ENCODE measurements at regions of chr4 and their contacts with region 1.

Region 1: GRCh38 chr4:87679449-87680169 is 29.5 kb downstream of the DMP1 start:
- DNase-seq: no peak
- H3K4me3 ChIP-seq: no peak overlapping the region
- H3K27ac ChIP-seq: no peak overlapping the region
- H3K4me1 ChIP-seq: no peaks in the 10 kb centered on the region
- H3K27me3 ChIP-seq: no peaks in the 10 kb centered on the region
- CTCF ChIP-seq: peak; percentile 87

Region 2: GRCh38 chr4:87838890-87839591 is 159.4 kb after region 1 on chr4:
- CTCF ChIA-PET with region 1: no interaction called
- POLR2A ChIA-PET with region 1: no interaction called
- intact Hi-C with region 1: loop called (anchors 1 kb)
- DNase-seq: no peak
- H3K4me3 ChIP-seq: no peak overlapping the region
- H3K27ac ChIP-seq: no peak overlapping the region
- H3K4me1 ChIP-seq: no peaks in the 10 kb centered on the region
- H3K27me3 ChIP-seq: no peaks in the 10 kb centered on the region
- CTCF ChIP-seq: peak; percentile 79

Region 3: GRCh38 chr4:87985097-87985886 is 305.7 kb after region 1 on chr4:
- CTCF ChIA-PET with region 1: interaction called, 3 read pairs
- POLR2A ChIA-PET with region 1: no interaction called
- intact Hi-C with region 1: loop called (anchors 10 kb)
- DNase-seq: peak; percentile 35 to 56
- H3K4me3 ChIP-seq: no peak overlapping the region
- H3K27ac ChIP-seq: no peak overlapping the region
- H3K4me1 ChIP-seq: no peaks in the 10 kb centered on the region
- H3K27me3 ChIP-seq: no peaks in the 10 kb centered on the region
- CTCF ChIP-seq: peak; percentile 69